Activated naive CD4-positive, alpha-beta T cell treated with anti-CD3 and anti-CD28 coated beads, Interleukin-2, amount 10 ng/mL, durations not matched to agents 7 days and 5 days (primary cell): ENCODE measurements at regions of chr20 and their contacts with region 1.

Region 1: DNA sequence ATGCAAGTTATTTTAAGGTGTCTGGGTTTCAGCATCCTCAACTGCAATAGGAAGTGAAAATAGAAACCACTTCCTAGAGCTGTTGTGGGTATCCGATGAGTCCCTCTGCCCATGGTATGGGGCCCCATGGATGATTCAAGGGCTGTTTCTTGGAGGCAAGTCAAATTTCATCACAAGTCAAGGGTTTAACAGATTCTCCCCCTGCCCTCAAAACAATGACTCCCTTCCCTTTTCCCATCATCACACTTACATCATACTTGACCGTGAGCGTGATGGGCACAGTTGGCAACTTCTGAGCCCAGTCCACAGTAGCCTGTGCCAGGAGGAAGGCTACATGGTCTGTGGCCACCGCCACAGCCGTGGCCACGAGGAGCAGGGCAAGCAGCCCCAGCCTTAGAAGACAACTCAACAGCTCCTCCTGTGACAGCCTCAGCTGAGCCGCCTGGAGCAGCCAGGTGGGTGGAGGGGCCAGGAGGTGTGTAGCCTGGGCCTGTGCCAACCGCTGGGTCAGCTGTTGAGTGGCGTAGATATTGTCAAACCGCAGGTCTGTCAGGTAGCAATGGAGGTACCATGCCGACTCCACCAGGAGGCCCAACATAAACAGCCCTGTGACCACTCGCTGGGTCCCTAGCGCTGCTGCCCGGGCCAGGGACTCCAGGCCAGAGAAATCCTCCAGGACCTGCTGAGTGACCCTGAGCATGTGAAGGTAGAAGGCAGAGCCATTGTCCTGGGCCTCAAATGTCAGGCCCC is 5.2 kb downstream of the OCSTAMP start:
- DNase-seq: peak; percentile 67
- H3K4me3 Mint-ChIP-seq: peak overlapping the region; percentile 40
- H3K27ac Mint-ChIP-seq: peak overlapping the region; percentile 91
- H3K4me1 Mint-ChIP-seq: peaks cover 14% of the 10 kb centered on the region
- H3K27me3 Mint-ChIP-seq: peaks cover 38% of the 10 kb centered on the region

Region 2: DNA sequence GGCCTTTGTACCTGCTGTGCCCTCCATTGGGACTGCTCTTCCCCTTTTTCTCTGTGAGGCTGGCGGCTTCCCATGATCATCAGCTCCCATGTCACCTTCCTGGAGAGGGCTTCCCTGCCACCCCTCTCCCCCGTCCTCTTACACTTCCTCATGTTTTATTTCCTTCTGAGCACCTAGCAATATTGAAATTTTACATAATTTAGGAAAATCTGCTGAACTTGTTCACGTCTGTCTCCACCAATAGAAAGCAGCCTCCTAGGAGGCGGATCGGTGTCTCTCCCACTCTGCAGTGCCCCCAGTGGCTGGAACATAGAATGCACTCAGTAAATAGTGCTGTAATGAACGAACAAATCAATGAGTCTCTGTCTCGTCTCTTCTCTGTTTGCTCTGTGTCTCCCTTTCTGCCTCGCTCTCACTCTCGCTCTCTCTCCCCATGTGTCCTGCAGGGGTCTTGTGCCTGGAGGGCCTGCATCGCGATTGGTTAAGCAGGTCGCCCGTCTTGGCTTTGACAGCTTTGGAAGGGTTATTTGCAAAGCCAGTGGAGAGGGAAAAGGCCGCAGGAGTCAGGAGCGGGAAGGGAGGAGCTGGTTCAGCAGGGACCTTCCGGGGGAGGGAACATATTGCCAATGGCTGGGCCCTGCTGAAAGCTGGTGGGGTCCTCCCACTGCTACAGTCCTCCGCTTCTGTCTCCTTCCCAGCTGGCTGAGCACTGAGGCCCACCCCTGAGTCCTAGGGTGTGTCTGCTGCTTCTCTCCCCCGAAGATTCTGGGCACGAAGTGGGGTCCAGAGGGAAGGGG is 17.3 kb after region 1 on chr20:
- CTCF ChIA-PET with region 1: interaction called, 54 read pairs
- DNase-seq: peak; percentile 78
- H3K4me3 Mint-ChIP-seq: no peak overlapping the region
- H3K27ac Mint-ChIP-seq: no peak overlapping the region
- H3K4me1 Mint-ChIP-seq: peaks cover 20% of the 10 kb centered on the region
- H3K27me3 Mint-ChIP-seq: peaks cover 25% of the 10 kb centered on the region

Region 3: GRCh38 chr20:46568570-46569129 is 23.4 kb after region 1 on chr20:
- CTCF ChIA-PET with region 1: interaction called, 13 read pairs
- DNase-seq: no peak
- H3K4me3 Mint-ChIP-seq: no peak overlapping the region
- H3K27ac Mint-ChIP-seq: no peak overlapping the region
- H3K4me1 Mint-ChIP-seq: no peaks in the 10 kb centered on the region
- H3K27me3 Mint-ChIP-seq: peaks cover 56% of the 10 kb centered on the region

Region 4: GRCh38 chr20:46681032-46681854 is 136.0 kb after region 1 on chr20:
- CTCF ChIA-PET with region 1: interaction called, 63 read pairs
- DNase-seq: peak; percentile 84
- H3K4me3 Mint-ChIP-seq: no peak overlapping the region
- H3K27ac Mint-ChIP-seq: peak overlapping the region; percentile 9
- H3K4me1 Mint-ChIP-seq: peaks cover 14% of the 10 kb centered on the region
- H3K27me3 Mint-ChIP-seq: no peaks in the 10 kb centered on the region

Region 5: DNA sequence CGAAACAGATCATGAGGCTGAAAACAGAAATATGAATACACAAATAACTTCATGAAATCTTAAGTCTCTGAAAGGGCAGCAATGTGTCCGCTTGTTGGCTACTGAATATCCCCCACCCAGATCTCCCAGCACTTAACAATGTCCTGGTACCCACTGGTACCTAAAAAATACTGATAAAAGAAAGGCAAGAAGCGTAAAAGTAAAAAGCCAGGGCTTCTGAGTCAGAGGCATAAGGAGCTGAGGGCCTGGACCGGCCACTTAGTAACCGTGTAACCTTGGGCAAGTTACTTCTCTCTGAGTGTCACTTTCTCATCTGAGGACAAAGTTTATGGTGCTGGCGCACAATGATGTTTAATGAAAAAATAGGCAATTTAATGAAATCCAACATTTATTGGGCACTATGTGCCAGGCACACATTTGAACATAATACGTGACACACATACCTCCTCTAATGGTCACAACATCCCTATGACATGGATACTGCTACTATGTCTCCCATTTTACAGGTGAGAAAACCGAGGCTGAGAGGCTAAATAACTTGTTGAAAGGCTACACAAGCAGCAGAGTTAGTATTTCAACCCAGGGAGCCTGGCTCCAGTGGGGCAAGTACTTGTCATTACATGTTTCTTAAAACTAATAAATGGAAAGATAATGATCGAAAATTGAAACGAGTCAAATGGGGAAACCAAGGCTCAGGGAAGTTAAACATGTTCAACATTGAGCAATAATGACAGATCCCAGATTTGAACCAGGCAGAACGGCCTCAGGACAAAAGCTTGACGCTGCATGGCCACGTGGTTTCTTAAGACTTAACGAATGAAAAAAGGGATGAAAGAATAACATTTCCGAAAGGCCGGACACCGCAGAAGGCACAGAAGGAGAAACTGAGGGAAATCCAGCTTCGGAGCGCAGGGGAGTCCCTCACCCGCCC is 143.2 kb after region 1 on chr20:
- CTCF ChIA-PET with region 1: interaction called, 32 read pairs
- DNase-seq: no peak
- H3K4me3 Mint-ChIP-seq: peak overlapping the region; percentile 85
- H3K27ac Mint-ChIP-seq: peak overlapping the region; percentile 83
- H3K4me1 Mint-ChIP-seq: peaks cover 43% of the 10 kb centered on the region
- H3K27me3 Mint-ChIP-seq: no peaks in the 10 kb centered on the region